B cell (primary cell): ENCODE measurements at regions of chr10 and their contacts with region 1.

Region 1: GRCh38 chr10:110610308-110610774 is 33.8 kb upstream of the RBM20 start:
- DNase-seq: peak; percentile 70
- ATAC-seq: peak; percentile 66
- H3K4me3 ChIP-seq: no peak overlapping the region
- H3K4me3 Mint-ChIP-seq: no peak overlapping the region
- H3K27ac ChIP-seq: no peak overlapping the region
- H3K27ac Mint-ChIP-seq: no peak overlapping the region
- H3K4me1 ChIP-seq: peaks cover 4 to 6% of the 10 kb centered on the region in 2 donors
- H3K4me1 Mint-ChIP-seq: peaks cover 18% of the 10 kb centered on the region
- H3K27me3 ChIP-seq: no peaks in the 10 kb centered on the region
- H3K27me3 Mint-ChIP-seq: no peaks in the 10 kb centered on the region
- CTCF ChIP-seq: peak; percentile 91

Region 2: GRCh38 chr10:110671788-110672579 is 61.6 kb after region 1 on chr10:
- CTCF ChIA-PET with region 1: interaction called, 19 read pairs
- POLR2A ChIA-PET with region 1: no interaction called
- intact Hi-C with region 1: loop called (anchors 2 kb)
- DNase-seq: peak; percentile 79
- ATAC-seq: peak; percentile 94
- H3K4me3 ChIP-seq: peak overlapping the region; percentile 63 to 77 (median 72)
- H3K4me3 Mint-ChIP-seq: peak overlapping the region; percentile 91
- H3K27ac ChIP-seq: peak overlapping the region; percentile 70 to 76
- H3K27ac Mint-ChIP-seq: peak overlapping the region; percentile 77
- H3K4me1 ChIP-seq: peaks cover 3 to 8% of the 10 kb centered on the region in 2 donors
- H3K4me1 Mint-ChIP-seq: peaks cover 2% of the 10 kb centered on the region
- H3K27me3 ChIP-seq: no peaks in the 10 kb centered on the region
- H3K27me3 Mint-ChIP-seq: peaks cover 38% of the 10 kb centered on the region
- CTCF ChIP-seq: peak; percentile 94

Region 3: GRCh38 chr10:110871298-110872084 is 261.1 kb after region 1 on chr10 and contains the start of gene PDCD4:
- CTCF ChIA-PET with region 1: no interaction called
- POLR2A ChIA-PET with region 1: no interaction called
- intact Hi-C with region 1: loop called (anchors 5 kb)
- DNase-seq: peak; percentile 92
- ATAC-seq: peak; percentile 74
- H3K4me3 ChIP-seq: peak within 1 kb of the TSS; percentile 82 to 94 (median 85)
- H3K4me3 Mint-ChIP-seq: peak within 1 kb of the TSS; percentile 91
- H3K27ac ChIP-seq: peak within 1 kb of the TSS; percentile 89 to 94
- H3K27ac Mint-ChIP-seq: peak within 1 kb of the TSS; percentile 96
- H3K4me1 ChIP-seq: peaks cover 61% of the 10 kb centered on the region in 2 donors
- H3K4me1 Mint-ChIP-seq: peaks cover 60% of the 10 kb centered on the region
- H3K27me3 ChIP-seq: no peaks in the 10 kb centered on the region
- H3K27me3 Mint-ChIP-seq: no peaks in the 10 kb centered on the region
- CTCF ChIP-seq: no peak
- total RNA-seq, gene PDCD4: 169 and 185 TPM in 2 replicates

Region 4: DNA sequence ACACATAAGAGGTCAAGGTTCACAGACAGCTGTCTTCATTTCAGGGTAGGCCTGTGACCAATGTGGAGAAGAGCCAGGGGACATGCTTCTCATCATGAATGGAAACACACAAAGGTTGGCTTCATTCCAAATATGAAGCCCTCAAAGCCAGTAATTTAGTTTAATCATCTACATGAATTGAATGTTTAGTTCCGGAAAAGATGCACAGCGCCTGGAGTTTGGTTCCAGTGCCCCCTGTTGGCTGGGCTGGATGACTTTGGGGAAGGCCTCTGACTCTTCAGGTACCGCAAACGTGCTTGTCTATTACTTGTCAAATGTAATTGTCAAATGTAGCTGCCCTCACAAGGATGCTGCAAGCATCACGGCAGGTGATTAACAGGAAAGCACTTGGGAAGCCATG is 597.2 kb after region 1 on chr10:
- CTCF ChIA-PET with region 1: no interaction called
- POLR2A ChIA-PET with region 1: no interaction called
- intact Hi-C with region 1: loop called (anchors 2 kb)
- DNase-seq: peak; percentile 8
- ATAC-seq: no peak
- H3K4me3 ChIP-seq: no peak overlapping the region
- H3K4me3 Mint-ChIP-seq: no peak overlapping the region
- H3K27ac ChIP-seq: no peak overlapping the region
- H3K27ac Mint-ChIP-seq: no peak overlapping the region
- H3K4me1 ChIP-seq: no peaks in the 10 kb centered on the region
- H3K4me1 Mint-ChIP-seq: no peaks in the 10 kb centered on the region
- H3K27me3 ChIP-seq: peaks cover 0 to 7% (median 1%) of the 10 kb centered on the region in 4 experiments
- H3K27me3 Mint-ChIP-seq: peaks cover 10% of the 10 kb centered on the region
- CTCF ChIP-seq: no peak

Region 5: DNA sequence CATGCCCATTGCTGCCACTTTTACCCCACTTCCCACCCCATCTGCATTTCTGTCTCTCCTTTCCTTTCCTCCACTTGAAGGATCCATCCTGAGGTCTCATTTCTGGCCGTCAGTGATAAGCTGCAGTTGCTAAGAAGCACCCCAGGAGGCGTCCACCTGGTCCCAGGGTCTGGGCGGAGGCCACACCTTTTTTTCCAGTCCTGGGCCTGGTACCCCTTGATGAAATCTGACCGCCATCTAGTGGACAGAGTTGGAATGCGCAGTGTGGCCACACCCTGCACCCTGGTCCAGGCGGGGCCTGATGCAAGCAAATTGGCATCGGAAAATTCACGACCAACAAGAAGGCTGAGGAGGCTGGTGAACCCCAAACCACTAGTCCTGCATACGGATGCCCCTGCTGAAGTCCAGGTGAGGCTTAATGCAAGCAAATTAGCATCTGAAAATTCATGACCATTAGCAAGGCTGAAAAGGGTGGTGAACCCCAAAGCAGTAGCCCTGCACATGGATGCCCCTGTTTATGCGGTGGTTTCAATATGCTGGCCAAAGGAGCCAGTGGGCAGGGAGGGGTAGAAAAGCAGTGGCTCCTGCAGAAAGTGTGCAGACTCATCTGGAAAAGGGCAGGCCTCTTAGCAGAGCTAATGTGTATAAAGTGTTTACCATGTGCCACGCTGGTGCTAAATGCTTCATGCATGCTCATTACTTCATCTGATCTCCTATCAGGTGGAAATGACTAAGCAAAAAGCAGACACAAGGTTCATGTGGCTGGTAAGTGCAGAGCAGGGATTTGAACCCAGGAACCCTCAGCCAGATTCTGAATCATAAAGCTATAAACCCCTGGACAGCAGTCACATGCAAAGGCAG is 1530.0 kb after region 1 on chr10:
- CTCF ChIA-PET with region 1: interaction called, 10 read pairs
- POLR2A ChIA-PET with region 1: no interaction called
- intact Hi-C with region 1: loop called (anchors 5 kb)
- DNase-seq: peak; percentile 69
- ATAC-seq: peak; percentile 98
- H3K4me3 ChIP-seq: no peak overlapping the region
- H3K4me3 Mint-ChIP-seq: no peak overlapping the region
- H3K27ac ChIP-seq: no peak overlapping the region
- H3K27ac Mint-ChIP-seq: no peak overlapping the region
- H3K4me1 ChIP-seq: no peaks in the 10 kb centered on the region
- H3K4me1 Mint-ChIP-seq: peaks cover 6% of the 10 kb centered on the region
- H3K27me3 ChIP-seq: no peaks in the 10 kb centered on the region
- H3K27me3 Mint-ChIP-seq: no peaks in the 10 kb centered on the region
- CTCF ChIP-seq: peak; percentile 84